ENCODE measurements at regions of chr12 and their contacts with region 1.

Region 1: DNA sequence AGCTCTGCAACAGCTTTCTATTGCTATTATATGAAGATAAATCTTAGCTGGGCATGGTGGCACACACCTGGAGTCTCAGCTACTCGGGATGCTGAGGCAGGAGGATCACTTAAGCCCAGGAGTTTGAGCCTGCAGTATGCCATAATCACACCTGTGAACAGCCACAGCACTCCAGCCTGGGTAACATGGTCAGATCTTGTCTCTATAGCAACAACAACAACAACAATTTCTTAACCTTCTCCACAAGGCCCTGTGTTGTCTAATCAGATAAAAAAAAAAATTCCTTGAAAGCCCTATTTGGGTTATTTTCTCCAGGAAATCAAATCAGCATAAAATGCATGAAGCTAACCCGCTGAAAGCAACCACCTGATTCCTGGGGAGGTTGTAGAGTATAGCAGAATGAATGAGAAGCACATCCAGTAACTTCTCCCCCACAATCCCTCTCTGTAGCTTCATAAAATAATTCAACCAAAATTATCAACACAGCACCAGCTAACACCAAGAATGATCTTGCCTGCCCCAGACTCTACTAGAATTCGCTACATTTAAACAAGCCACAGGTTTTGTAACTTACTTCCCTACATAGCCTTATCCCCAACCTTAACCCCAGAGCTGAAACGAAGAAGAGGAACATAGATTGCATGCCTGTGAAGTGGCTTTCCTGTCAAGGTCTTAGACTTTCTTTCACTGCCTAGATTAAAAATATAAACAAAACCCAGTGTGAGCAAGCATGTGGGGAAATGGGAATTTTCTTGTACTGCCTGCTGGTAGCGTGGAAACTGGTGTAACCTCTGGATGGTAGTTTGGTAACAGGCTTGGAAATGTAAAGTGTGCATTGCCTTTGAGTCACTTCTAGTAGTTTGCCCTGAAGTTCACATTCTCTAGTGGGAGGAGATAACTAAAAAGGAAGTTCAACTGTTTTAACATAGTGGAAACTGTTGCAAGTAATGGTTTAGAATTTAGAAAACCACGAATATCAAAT is 6.0 kb upstream of the STK38L start:
- DNase-seq: peak; percentile 19
- H3K4me3 Mint-ChIP-seq: peak overlapping the region; percentile 67
- H3K27ac Mint-ChIP-seq: peak overlapping the region; percentile 68
- H3K4me1 Mint-ChIP-seq: peaks cover 41% of the 10 kb centered on the region
- H3K27me3 Mint-ChIP-seq: peaks cover 2% of the 10 kb centered on the region

Region 2: DNA sequence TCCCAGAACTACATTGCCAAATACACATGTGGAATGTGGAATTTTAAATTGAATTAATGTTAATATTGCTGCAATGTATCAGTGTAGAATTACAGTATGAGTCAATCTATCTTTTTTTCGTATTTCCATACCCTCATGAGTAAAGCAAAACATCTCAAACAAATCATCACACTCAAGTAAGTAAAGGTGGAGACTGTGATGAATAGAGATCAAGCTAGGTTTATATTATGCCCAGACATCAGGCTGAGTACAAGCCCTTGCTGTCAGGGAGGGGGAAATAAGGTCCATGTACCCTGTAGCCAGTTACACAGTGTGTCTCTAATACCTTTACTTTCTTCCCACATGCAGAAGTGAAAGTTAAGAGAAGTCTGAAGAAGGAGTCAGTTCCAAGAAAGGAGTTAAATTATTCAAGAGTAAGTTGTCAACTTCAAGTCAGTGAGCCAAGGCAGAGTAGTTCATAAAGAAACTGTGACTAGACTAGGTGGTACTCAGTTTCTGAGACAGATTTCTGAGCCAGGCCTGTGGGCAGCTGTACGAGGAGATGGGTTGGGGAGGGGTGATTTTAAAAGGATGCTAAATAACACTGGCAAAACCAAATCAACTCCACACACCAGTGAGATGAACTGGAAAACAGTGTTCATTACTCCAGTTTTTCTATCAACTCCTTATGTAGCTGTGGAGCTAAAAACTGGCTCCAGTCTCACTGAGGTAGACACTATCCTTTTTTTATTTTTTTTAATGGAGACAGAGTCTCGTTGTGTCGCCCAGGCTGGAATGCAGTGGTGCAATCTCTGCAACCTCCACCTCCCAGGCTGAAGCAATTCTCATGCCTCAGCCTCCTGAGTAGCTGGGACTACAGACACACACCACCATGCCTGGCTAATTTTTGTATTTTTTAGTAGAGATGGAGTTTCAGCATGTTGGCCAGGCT is 17.8 kb before region 1 on chr12:
- intact Hi-C with region 1: loop called (anchors 2 kb)
- DNase-seq: no peak
- H3K4me3 Mint-ChIP-seq: peak overlapping the region; percentile 29
- H3K27ac Mint-ChIP-seq: peak overlapping the region; percentile 59
- H3K4me1 Mint-ChIP-seq: peaks cover 20% of the 10 kb centered on the region
- H3K27me3 Mint-ChIP-seq: peaks cover 4% of the 10 kb centered on the region

Measured in activated T-helper 1 cell treated with anti-CD3 and anti-CD28 coated beads, Interleukin-12 subunit alpha, Interleukin-12 subunit beta, Interleukin-2, Interleukin-4 antibody, amounts not matched to agents 30 ng/mL and 10 ng/mL and 1 ng/mL, durations not matched to agents 14 hours and 24 hours and 36 hours (primary cell).